Vagina (tissue), 2 donors: ENCODE measurements at regions of chr4 and their contacts with region 1.

Region 1: DNA sequence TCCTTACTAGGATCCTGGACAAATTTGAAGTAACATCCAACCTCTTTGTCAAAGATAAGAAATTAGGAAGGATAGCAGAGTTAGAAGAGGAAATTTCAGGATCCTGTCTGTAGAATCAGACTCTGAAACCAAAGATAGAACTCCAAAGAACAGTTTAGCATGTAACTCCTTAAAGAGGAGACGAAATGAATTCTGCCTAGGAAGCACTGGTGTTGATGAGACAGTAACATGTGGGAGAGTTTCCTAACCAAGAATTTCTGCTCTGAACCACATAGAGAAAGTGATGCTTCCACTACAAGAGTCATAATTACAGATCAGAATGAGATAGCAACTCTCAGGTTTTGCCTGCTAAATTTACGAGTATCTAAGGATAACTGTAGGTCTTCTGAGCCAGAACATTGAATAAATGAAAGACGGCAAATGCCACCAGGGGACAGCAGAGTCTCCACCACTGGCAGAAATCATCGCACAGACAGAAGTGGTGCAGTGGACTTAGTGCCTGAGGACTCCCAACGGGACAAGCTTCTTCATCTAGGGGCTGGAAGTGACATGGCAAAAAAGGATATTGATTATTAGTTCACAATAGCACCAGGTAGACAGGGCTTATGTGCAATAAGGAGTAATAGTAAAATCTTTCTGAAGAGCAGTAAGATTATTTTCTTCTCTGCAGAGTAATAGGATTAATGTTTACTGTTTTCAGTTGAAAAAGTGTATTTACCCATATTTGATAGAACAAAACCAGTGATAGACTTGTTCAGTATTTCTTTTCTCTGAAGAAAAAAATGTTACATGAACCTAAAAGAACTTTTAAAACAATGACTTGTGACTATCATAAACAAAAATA is 6.7 kb upstream of the PPID start:
- DNase-seq: no peak
- H3K4me3 ChIP-seq: no peak overlapping the region
- H3K27ac ChIP-seq: no peak overlapping the region
- H3K4me1 ChIP-seq: no peaks in the 10 kb centered on the region
- H3K27me3 ChIP-seq: no peaks in the 10 kb centered on the region
- CTCF ChIP-seq: peak; percentile 64 to 95 (median 85)
- POLR2A ChIP-seq: no peak

Region 2: DNA sequence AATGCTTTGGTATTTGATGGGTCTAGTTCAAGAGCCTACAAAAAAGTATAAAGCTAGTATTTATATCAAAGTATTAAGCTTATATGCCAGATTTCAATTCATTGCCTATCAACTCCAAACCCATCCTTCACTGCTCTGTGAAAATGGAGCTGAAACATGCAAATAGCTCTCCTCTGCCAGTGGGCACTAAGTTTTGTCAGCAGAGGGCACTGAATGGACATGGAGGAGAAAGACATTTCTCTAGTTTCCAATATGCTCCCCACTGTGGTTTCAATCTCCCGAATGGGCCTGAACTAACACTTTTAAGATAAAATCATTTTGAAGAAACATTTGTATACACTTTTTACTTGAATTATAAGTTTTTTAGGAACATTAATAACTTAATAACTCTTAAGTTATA is 19.1 kb before region 1 on chr4:
- intact Hi-C with region 1: no loop called
- DNase-seq: no peak
- H3K4me3 ChIP-seq: no peak overlapping the region
- H3K27ac ChIP-seq: no peak overlapping the region
- H3K4me1 ChIP-seq: no peaks in the 10 kb centered on the region
- H3K27me3 ChIP-seq: no peaks in the 10 kb centered on the region
- CTCF ChIP-seq: no peak
- POLR2A ChIP-seq: no peak

Region 3: DNA sequence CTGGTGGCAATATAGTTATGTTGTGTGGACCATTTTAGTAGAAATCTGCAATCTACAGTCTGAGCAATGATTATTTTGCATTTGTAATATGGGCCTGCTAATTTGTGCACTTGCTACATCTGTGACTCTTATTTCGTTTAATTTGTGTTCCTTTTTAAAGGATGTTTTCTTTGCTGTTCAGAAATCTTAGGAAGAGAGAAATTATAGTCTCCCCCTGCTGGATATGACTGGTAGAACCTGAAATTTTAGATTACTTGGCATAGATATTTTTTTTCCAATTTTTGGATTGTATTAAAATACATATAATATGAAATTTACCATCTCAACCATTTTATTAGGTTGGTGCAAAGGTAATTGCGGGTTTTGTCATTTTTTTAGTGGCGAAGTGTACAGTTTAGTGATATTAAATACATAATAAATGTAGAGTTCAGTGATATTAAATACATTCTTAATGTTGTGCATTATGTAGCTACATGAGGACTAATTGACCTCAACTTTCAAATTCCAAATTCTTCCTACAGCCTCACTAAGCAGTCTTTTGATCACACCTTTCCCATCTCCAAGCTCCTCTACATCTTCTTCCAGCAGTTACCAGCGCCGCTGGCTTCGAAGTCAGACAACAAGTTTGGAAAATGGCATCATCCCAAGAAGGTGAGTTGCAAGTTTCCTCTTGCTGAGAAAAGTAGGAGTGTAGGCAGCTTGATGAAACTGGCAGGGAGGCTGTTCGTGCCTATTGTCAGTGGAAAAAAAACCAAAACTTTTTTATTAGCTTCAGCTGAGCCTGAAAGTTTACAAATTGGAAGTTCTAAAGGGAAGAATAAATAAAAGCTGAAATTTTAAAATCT is 121.1 kb after region 1 on chr4:
- intact Hi-C with region 1: loop called (anchors 5 kb)
- DNase-seq: no peak
- H3K4me3 ChIP-seq: no peak overlapping the region
- H3K27ac ChIP-seq: no peak overlapping the region
- H3K4me1 ChIP-seq: no peaks in the 10 kb centered on the region
- H3K27me3 ChIP-seq: no peaks in the 10 kb centered on the region
- CTCF ChIP-seq: peak; percentile 48 to 69 (median 63)
- POLR2A ChIP-seq: no peak